RWPE1 (cell line): ENCODE measurements at regions of chr11 and their contacts with region 1.

Region 1: GRCh38 chr11:7986768-7987559 is at the start of gene EIF3F:
- DNase-seq: peak; percentile 98
- H3K27ac ChIP-seq: peak within 1 kb of the TSS; percentile 72
- CTCF ChIP-seq: peak; percentile 87

Region 2: GRCh38 chr11:7892840-7893254 is 94.1 kb before region 1 on chr11:
- CTCF ChIA-PET with region 1: interaction called, 37 read pairs
- POLR2A ChIA-PET with region 1: interaction called, 4 read pairs
- DNase-seq: peak; percentile 71
- H3K27ac ChIP-seq: no peak overlapping the region
- CTCF ChIP-seq: peak; percentile 74

Region 3: GRCh38 chr11:8018484-8019313 is 31.7 kb after region 1 on chr11:
- CTCF ChIA-PET with region 1: no interaction called
- POLR2A ChIA-PET with region 1: no interaction called
- DNase-seq: peak; percentile 22
- H3K27ac ChIP-seq: no peak overlapping the region
- CTCF ChIP-seq: no peak